ENCODE measurements at regions of chr12 and their contacts with region 1.

Region 1: GRCh38 chr12:52147367-52147972 is 44.3 kb downstream of the KRT80 start:
- DNase-seq: peak; percentile 99
- ATAC-seq: peak; percentile 61
- H3K4me3 ChIP-seq: peak overlapping the region; percentile 46 to 55
- H3K27ac ChIP-seq: peak overlapping the region; percentile 100
- H3K4me1 ChIP-seq: peaks cover 83 to 99% of the 10 kb centered on the region in 2 experiments
- H3K27me3 ChIP-seq: no peaks in the 10 kb centered on the region
- CTCF ChIP-seq: no peak
- POLR2A ChIP-seq: no peak
- RAD21 ChIP-seq: no peak

Region 2: DNA sequence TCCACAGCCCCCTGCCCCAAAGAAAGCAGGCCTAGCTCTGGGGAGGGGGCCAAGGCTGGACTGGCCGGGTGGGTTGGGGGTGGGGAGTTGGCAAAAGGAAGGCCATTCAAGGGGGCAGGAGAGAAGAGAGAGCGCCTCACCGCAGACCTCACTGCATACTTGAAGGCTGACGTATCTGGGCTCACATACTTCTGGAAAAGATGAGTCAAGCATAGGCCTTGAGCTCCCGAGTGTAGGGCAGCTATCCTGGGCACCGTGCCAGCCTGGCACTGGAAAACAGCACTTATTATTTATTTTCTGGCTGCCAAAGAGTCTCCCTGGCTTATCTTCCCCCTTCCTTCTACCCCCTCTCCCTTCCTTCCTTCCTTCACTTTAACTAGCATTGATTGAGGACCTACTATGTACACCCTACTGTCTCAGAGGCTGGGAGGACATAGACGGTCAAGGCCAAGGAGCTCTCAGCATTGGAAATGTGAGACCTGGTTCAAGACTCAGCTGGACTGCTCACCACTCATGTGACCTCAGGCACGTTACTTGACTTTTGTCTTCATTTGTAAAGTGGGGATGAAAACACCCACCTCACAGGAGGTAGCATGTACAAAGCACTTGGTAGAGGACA is 44.8 kb after region 1 on chr12:
- CTCF ChIA-PET with region 1: interaction called, 3 read pairs
- POLR2A ChIA-PET with region 1: interaction called, 11 read pairs
- RAD21 ChIA-PET with region 1: no interaction called
- intact Hi-C with region 1: no loop called
- DNase-seq: peak; percentile 97
- ATAC-seq: peak; percentile 88
- H3K4me3 ChIP-seq: peak overlapping the region; percentile 39 to 52; a peak in 3 of 4 replicates
- H3K27ac ChIP-seq: peak overlapping the region; percentile 62
- H3K4me1 ChIP-seq: peaks cover 54 to 85% of the 10 kb centered on the region in 2 experiments
- H3K27me3 ChIP-seq: no peaks in the 10 kb centered on the region; the same call in 1 of the 2 replicates
- CTCF ChIP-seq: no peak
- POLR2A ChIP-seq: no peak
- RAD21 ChIP-seq: no peak

Region 3: DNA sequence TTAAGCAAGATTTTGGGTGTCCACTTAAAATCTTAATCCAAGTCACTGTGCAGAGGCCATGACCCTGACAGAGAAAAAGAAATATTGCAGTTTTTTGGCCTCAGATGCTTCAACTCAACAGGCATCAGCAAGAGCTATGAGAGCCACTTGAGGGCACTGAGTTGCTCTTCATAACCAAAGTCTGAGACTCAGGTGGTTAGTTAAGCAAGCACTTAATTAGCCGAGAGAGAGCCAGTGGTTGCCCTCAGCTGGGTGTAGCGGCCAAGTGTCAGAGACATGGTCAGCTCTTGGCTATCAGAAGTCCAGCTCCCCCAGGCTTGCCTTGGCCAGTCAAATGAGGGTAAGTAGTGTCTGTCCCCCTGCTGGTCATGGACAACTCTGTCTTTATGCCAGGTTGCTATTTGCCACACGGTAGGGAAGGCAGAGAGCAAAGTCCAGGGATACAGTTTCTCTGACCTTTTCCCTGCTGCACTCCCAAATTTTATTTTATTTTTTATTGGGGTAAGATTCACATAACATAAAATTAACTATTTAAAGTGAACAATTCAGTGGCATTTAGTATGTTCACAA is 414.5 kb after region 1 on chr12:
- CTCF ChIA-PET with region 1: interaction called, 10 read pairs
- POLR2A ChIA-PET with region 1: no interaction called
- RAD21 ChIA-PET with region 1: no interaction called
- intact Hi-C with region 1: no loop called
- DNase-seq: peak; percentile 22
- ATAC-seq: peak; percentile 84
- H3K4me3 ChIP-seq: no peak overlapping the region
- H3K27ac ChIP-seq: no peak overlapping the region
- H3K4me1 ChIP-seq: no peaks in the 10 kb centered on the region
- H3K27me3 ChIP-seq: no peaks in the 10 kb centered on the region
- CTCF ChIP-seq: peak; percentile 59 to 66 (median 60); a peak in 5 of 6 replicates
- POLR2A ChIP-seq: no peak
- RAD21 ChIP-seq: peak; percentile 54

Region 4: DNA sequence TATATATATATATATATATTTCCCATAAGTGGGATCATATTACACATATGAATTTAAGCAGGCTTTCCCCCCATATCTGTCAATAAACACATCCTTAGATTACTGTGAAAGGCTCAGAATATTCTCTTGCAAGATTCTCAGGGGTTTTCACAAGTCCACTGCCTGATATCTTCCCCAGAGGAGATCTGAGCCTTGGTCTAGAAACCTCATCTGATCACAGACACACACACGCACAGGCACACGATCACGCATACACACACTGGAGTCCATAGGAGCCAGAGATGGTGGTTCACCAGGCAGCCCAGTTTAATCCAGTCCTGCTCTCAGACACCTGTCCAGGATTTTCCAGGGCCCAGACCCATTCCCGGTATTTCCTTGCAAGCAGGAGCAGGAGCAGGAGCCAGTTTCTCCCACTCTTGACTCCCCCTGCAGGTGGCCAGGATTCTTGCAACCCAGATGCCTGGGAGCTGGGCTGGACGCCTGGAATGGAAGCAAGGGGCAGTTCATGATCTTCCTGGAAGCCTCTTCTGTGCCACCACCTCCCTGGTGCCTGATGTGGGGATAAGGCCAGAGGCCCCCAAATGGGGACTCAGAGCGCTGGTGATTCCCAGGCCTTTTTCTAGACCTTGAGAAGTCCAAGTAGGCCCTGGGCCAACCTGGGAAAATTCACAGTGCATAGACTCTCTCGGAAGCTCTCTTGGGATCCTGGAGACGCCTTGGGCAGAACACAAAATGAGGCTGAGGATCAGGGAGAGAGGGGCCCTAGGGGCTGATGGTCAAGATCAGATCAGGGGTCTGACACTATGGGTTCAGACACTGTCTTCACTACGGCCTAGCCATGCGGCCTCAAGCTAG is 717.8 kb after region 1 on chr12:
- CTCF ChIA-PET with region 1: interaction called, 15 read pairs
- POLR2A ChIA-PET with region 1: interaction called, 48 read pairs
- RAD21 ChIA-PET with region 1: interaction called in 1 of 2 experiments, 6 read pairs
- intact Hi-C with region 1: loop called (anchors 5 kb)
- DNase-seq: peak; percentile 79
- ATAC-seq: peak; percentile 90
- H3K4me3 ChIP-seq: no peak overlapping the region
- H3K27ac ChIP-seq: peak overlapping the region; percentile 15; the same call in 1 of the 2 replicates
- H3K4me1 ChIP-seq: peaks cover 5 to 18% of the 10 kb centered on the region in 2 experiments; a peak in 3 of 4 replicates
- H3K27me3 ChIP-seq: no peaks in the 10 kb centered on the region
- CTCF ChIP-seq: peak in 2 of 3 experiments; percentile 88 to 96; a peak in 4 of 6 replicates
- POLR2A ChIP-seq: no peak
- RAD21 ChIP-seq: no peak

Region 5: GRCh38 chr12:52870351-52871290 is 723.2 kb after region 1 on chr12:
- CTCF ChIA-PET with region 1: interaction called, 15 read pairs
- POLR2A ChIA-PET with region 1: interaction called, 48 read pairs
- RAD21 ChIA-PET with region 1: interaction called in 1 of 2 experiments, 6 read pairs
- intact Hi-C with region 1: loop called (anchors 5 kb)
- DNase-seq: no peak
- ATAC-seq: peak; percentile 71
- H3K4me3 ChIP-seq: 0 out of 4 replicates have a peak overlapping the region, but pooled peaks of 1 of the 2 experiments have one; percentile 16
- H3K27ac ChIP-seq: peak overlapping the region; percentile 81
- H3K4me1 ChIP-seq: peaks cover 48 to 64% of the 10 kb centered on the region in 2 experiments
- H3K27me3 ChIP-seq: no peaks in the 10 kb centered on the region
- CTCF ChIP-seq: peak in 2 of 3 experiments; percentile 89 to 96; a peak in 4 of 6 replicates
- POLR2A ChIP-seq: no peak
- RAD21 ChIP-seq: no peak

Region 6: GRCh38 chr12:52879394-52880351 is 732.2 kb after region 1 on chr12:
- CTCF ChIA-PET with region 1: interaction called, 140 read pairs
- POLR2A ChIA-PET with region 1: interaction called, 48 read pairs
- RAD21 ChIA-PET with region 1: interaction called, 3 to 6 read pairs
- intact Hi-C with region 1: loop called (anchors 5 kb)
- DNase-seq: peak; percentile 86
- ATAC-seq: peak; percentile 87
- H3K4me3 ChIP-seq: peak overlapping the region; percentile 30 to 49
- H3K27ac ChIP-seq: peak overlapping the region; percentile 44
- H3K4me1 ChIP-seq: peaks cover 33 to 61% of the 10 kb centered on the region in 2 experiments
- H3K27me3 ChIP-seq: no peaks in the 10 kb centered on the region
- CTCF ChIP-seq: peak in 2 of 3 experiments; percentile 76 to 95; a peak in 4 of 6 replicates
- POLR2A ChIP-seq: no peak
- RAD21 ChIP-seq: no peak

Region 7: GRCh38 chr12:52903285-52903854 is 755.9 kb after region 1 on chr12:
- CTCF ChIA-PET with region 1: no interaction called
- POLR2A ChIA-PET with region 1: interaction called, 14 read pairs
- RAD21 ChIA-PET with region 1: no interaction called
- intact Hi-C with region 1: no loop called
- DNase-seq: no peak
- ATAC-seq: peak; percentile 12
- H3K4me3 ChIP-seq: peak overlapping the region; percentile 91 to 97
- H3K27ac ChIP-seq: peak overlapping the region; percentile 82
- H3K4me1 ChIP-seq: peaks cover 58 to 77% of the 10 kb centered on the region in 2 experiments
- H3K27me3 ChIP-seq: no peaks in the 10 kb centered on the region
- CTCF ChIP-seq: no peak
- POLR2A ChIP-seq: no peak
- RAD21 ChIP-seq: no peak